Heart right ventricle (tissue), 16 donors: ENCODE measurements at regions of chr2 and their contacts with region 1.

Region 1: DNA sequence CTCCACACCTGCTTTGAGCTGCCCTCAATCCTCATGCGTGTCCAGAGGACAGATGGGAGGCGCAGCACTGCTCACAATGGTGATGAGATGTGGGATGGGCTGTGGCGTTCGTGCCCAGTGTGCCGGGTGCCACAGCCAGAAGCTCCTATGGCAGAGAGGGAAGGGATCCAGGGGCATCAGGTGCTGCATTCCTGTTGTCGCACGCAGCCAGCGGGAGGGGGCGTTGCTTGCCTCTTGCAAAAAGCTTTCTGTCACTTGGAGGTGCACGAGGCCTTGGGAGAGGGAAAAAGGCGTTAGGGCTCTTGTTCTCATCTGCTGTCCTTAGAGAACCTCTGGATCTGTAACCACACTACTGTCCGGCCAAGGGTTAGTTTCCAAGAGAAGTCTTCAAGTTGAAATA is 29.2 kb upstream of the ALLC start:
- DNase-seq: peak in 1 of 2 donors; percentile 4
- ATAC-seq: no peak
- H3K4me3 ChIP-seq: no peak overlapping the region
- H3K27ac ChIP-seq: peak overlapping the region in 1 of 10 donors; percentile 8
- H3K4me1 ChIP-seq: peaks cover 2 to 27% (median 12%) of the 10 kb centered on the region in 9 donors
- H3K27me3 ChIP-seq: no peaks in the 10 kb centered on the region
- CTCF ChIP-seq: peak in 1 of 9 donors; percentile 11

Region 2: DNA sequence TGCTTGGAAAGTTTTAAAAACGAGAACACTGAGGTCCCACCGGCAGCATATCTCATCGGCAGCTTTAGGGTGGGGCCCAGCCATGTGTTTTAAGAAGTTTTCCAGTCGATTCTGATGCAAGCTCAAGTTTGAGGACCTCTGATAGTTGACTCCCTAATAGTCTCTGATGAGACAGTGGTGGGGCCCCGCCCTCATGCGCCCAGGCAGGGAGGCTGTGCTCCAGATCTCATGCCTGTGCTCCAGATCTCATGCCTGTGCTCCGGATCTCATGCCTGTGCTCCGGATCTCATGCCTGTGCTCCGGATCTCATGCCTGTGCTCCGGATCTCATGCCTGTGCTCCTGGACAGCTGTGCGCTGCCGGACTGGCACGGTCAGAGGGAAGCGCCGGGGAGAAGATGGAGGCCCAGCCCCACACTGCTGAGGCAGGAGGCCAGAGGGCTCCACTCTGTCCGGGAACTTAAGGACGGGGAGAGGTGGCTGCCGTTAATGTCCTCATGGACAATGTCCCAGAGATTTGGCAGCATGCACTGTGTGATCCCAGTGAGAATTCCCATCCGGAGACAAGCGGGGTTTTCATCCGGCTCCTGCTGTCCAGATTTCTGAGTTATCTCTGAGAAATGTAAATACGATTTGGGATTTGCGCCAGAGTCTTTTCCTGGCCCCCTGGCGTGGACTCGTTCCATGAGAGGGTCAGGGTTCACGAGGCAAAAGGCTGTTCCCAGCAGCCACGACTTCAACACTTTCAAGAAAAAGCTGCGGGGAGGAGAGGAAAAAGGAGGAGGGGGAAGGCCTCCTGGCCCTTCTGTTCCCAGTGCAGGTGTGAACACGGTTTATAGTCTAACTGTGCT is 43.3 kb before region 1 on chr2:
- intact Hi-C with region 1: loop called in 3 of 10 experiments (anchors 5 kb)
- DNase-seq: peak; percentile 68 to 86
- ATAC-seq: peak; percentile 87 to 95 (median 92)
- H3K4me3 ChIP-seq: peak overlapping the region in 7 of 10 donors; percentile 3 to 43 (median 22)
- H3K27ac ChIP-seq: peak overlapping the region; percentile 68 to 89 (median 77)
- H3K4me1 ChIP-seq: peaks cover 3 to 27% (median 20%) of the 10 kb centered on the region in 9 donors
- H3K27me3 ChIP-seq: no peaks in the 10 kb centered on the region
- CTCF ChIP-seq: no peak

Region 3: GRCh38 chr2:3594493-3595281 is 34.1 kb before region 1 on chr2 and contains the start of gene COLEC11:
- intact Hi-C with region 1: loop called in 3 of 10 experiments (anchors 5 kb)
- DNase-seq: peak; percentile 67 to 74
- ATAC-seq: peak; percentile 89 to 94 (median 92)
- H3K4me3 ChIP-seq: peak within 1 kb of the TSS in 9 of 10 donors; percentile 1 to 44 (median 41)
- H3K27ac ChIP-seq: peak within 1 kb of the TSS in 9 of 10 donors; percentile 0 to 72 (median 46)
- H3K4me1 ChIP-seq: peaks cover 0 to 14% (median 11%) of the 10 kb centered on the region in 9 donors
- H3K27me3 ChIP-seq: peaks cover 0 to 5% (median 0%) of the 10 kb centered on the region in 7 donors
- CTCF ChIP-seq: peak in 8 of 9 donors; percentile 11 to 66 (median 50)
- total RNA-seq, gene COLEC11: 2.0 to 7.2 (median 4.1) TPM

Region 4: GRCh38 chr2:3728104-3729054 is 99.6 kb after region 1 on chr2:
- intact Hi-C with region 1: no loop called
- DNase-seq: peak in 1 of 2 donors; percentile 37
- ATAC-seq: peak in 7 of 8 donors; percentile 16 to 78 (median 48)
- H3K4me3 ChIP-seq: peak overlapping the region in 3 of 10 donors; percentile 8 to 34 (median 25)
- H3K27ac ChIP-seq: no peak overlapping the region
- H3K4me1 ChIP-seq: peaks cover 0 to 13% (median 7%) of the 10 kb centered on the region in 9 donors
- H3K27me3 ChIP-seq: peaks cover 0 to 32% (median 18%) of the 10 kb centered on the region in 7 donors
- CTCF ChIP-seq: peak; percentile 29 to 70 (median 62)

Region 5: DNA sequence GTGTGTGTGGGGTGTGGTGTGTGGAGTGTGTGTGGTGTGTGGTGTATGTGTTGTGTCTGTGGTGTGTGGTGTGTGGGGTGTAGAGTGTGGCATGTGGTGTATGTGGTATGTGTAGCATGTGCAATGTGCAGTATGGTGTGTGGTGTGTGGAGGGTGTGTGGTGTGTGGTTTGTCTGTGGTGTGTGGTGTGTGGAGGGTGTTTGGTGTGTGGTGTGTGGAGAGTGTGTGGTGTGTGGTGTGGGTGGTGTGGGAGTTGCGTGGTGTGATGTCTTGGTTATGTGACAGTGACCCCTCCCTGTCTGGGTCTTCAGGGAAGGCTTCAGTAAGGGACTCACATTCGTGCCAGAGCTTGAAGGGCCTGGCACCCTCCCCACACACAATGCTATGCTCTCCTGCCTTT is 1345.2 kb after region 1 on chr2:
- intact Hi-C with region 1: no loop called
- DNase-seq: no peak
- ATAC-seq: peak in 3 of 8 donors; percentile 35 to 80 (median 69)
- H3K4me3 ChIP-seq: no peak overlapping the region
- H3K27ac ChIP-seq: no peak overlapping the region
- H3K4me1 ChIP-seq: no peaks in the 10 kb centered on the region
- H3K27me3 ChIP-seq: peaks cover 0 to 7% (median 0%) of the 10 kb centered on the region in 7 donors
- CTCF ChIP-seq: no peak